ENCODE measurements at regions of chr13 and their contacts with region 1.

Region 1: DNA sequence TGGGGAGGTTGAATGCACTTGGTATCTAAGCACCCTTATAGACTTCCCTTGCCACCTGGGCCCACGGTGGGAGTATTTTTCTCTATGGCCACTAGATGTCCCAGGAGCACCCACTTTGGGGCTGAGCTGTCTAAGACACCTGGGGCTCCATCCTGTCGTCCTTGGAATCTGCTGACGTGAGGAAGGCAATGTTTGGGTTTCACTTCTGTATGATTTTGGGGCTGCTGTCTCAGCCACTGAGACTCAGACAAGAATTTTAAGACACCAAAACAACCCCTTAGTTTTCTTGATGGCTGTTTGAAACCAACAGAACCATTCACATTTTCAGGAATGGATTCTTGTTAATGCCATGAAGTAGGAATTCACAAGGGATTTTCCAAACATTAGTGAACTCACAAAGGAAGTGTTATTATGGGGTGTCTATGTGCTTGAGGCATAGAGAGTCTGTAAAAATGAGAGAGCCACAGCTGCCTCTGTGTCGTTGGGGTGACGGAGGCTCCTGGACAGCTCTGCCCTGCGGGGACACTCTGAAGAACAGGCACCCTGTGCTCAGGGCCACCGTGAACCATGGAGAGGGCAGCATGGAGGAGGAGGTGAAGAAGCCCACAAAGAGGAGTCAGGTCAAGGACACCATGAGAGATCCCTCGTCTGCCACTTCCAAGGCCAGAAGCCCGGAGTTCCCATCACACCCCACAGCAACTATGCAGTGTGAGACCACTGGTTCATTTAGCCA is 106.8 kb upstream of the SPATA13 start:
- DNase-seq: peak; percentile 77
- H3K4me3 Mint-ChIP-seq: no peak overlapping the region
- H3K27ac Mint-ChIP-seq: no peak overlapping the region
- H3K4me1 Mint-ChIP-seq: peaks cover 3% of the 10 kb centered on the region
- H3K27me3 Mint-ChIP-seq: peaks cover 30% of the 10 kb centered on the region

Region 2: GRCh38 chr13:24039621-24040475 is 13.8 kb before region 1 on chr13:
- CTCF ChIA-PET with region 1: interaction called, 12 read pairs
- DNase-seq: no peak
- H3K4me3 Mint-ChIP-seq: no peak overlapping the region
- H3K27ac Mint-ChIP-seq: no peak overlapping the region
- H3K4me1 Mint-ChIP-seq: peaks cover 10% of the 10 kb centered on the region
- H3K27me3 Mint-ChIP-seq: no peaks in the 10 kb centered on the region

Region 3: GRCh38 chr13:24220086-24220703 is 166.5 kb after region 1 on chr13:
- CTCF ChIA-PET with region 1: interaction called, 106 read pairs
- DNase-seq: peak; percentile 61
- H3K4me3 Mint-ChIP-seq: no peak overlapping the region
- H3K27ac Mint-ChIP-seq: no peak overlapping the region
- H3K4me1 Mint-ChIP-seq: peaks cover 44% of the 10 kb centered on the region
- H3K27me3 Mint-ChIP-seq: no peaks in the 10 kb centered on the region

Region 4: GRCh38 chr13:24228852-24229458 is 175.3 kb after region 1 on chr13:
- CTCF ChIA-PET with region 1: interaction called, 106 read pairs
- DNase-seq: peak; percentile 59
- H3K4me3 Mint-ChIP-seq: no peak overlapping the region
- H3K27ac Mint-ChIP-seq: no peak overlapping the region
- H3K4me1 Mint-ChIP-seq: peaks cover 25% of the 10 kb centered on the region
- H3K27me3 Mint-ChIP-seq: no peaks in the 10 kb centered on the region

Region 5: DNA sequence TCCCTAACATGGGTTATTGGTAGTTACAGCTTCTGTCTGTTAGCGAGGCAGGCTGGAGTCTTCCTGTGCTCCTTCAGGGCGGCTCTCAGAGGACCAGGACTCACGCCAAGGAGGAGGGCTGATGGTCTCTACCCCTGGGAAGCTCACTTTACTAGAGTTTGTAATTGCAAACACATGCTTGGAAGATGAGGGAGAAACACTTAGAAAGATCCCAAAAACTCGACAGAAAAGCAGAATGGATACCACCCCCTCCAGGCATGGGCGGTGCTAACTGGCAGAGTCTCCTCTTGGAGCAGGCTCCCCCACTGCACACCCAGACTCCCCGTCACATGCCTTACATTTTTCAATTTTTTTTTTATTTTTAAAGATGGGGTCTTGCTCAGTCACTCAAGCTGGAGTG is 396.8 kb after region 1 on chr13:
- CTCF ChIA-PET with region 1: no interaction called
- DNase-seq: no peak
- H3K4me3 Mint-ChIP-seq: no peak overlapping the region
- H3K27ac Mint-ChIP-seq: peak overlapping the region; percentile 58
- H3K4me1 Mint-ChIP-seq: no peaks in the 10 kb centered on the region
- H3K27me3 Mint-ChIP-seq: no peaks in the 10 kb centered on the region

Measured in activated naive CD4-positive, alpha-beta T cell treated with anti-CD3 and anti-CD28 coated beads, Interleukin-2, amount 10 ng/mL, durations not matched to agents 7 days and 5 days (primary cell).